ENCODE measurements at regions of chr20 and their contacts with region 1.

Region 1: GRCh38 chr20:14744723-14745122 is 407.3 kb upstream of the FLRT3 start:
- DNase-seq: no peak
- H3K4me3 Mint-ChIP-seq: no peak overlapping the region
- H3K27ac Mint-ChIP-seq: no peak overlapping the region
- H3K4me1 Mint-ChIP-seq: no peaks in the 10 kb centered on the region
- H3K27me3 Mint-ChIP-seq: no peaks in the 10 kb centered on the region
- CTCF ChIP-seq: no peak

Region 2: DNA sequence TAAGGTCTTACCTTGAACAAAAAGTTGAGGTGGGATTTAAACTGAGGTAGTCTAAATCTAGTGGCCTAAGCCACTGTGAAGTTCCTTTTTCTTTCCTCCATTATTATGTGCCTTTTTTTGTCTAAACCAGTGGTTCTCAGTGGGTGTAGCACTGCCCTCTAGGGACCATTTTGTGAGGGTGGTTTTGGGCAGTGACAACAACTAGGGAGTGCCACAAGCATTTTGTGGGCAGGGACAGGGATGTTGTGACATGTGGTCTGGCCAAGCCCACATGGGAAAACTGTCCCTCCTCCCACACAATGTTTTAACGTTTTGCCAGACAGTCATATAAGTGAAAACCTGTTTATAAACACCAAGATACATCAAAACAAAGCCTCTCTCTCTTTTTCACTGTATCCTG is 492.1 kb after region 1 on chr20:
- CTCF ChIA-PET with region 1: no interaction called
- POLR2A ChIA-PET with region 1: no interaction called
- intact Hi-C with region 1: loop called (anchors 5 kb)
- DNase-seq: peak; percentile 65
- H3K4me3 Mint-ChIP-seq: no peak overlapping the region
- H3K27ac Mint-ChIP-seq: no peak overlapping the region
- H3K4me1 Mint-ChIP-seq: no peaks in the 10 kb centered on the region
- H3K27me3 Mint-ChIP-seq: no peaks in the 10 kb centered on the region
- CTCF ChIP-seq: peak; percentile 63